ENCODE measurements at regions of chr15 and their contacts with region 1.

Region 1: GRCh38 chr15:75367913-75368688 is at the start of gene MAN2C1:
- DNase-seq: peak; percentile 98
- ATAC-seq: peak; percentile 94
- H3K4me3 ChIP-seq: peak within 1 kb of the TSS; percentile 87
- H3K27ac ChIP-seq: peak within 1 kb of the TSS; percentile 91
- H3K4me1 ChIP-seq: peaks cover 16% of the 10 kb centered on the region
- H3K27me3 ChIP-seq: no peaks in the 10 kb centered on the region
- CTCF ChIP-seq: peak; percentile 79
- total RNA-seq, gene MAN2C1: 120 and 126 TPM in 2 replicates

Region 2: DNA sequence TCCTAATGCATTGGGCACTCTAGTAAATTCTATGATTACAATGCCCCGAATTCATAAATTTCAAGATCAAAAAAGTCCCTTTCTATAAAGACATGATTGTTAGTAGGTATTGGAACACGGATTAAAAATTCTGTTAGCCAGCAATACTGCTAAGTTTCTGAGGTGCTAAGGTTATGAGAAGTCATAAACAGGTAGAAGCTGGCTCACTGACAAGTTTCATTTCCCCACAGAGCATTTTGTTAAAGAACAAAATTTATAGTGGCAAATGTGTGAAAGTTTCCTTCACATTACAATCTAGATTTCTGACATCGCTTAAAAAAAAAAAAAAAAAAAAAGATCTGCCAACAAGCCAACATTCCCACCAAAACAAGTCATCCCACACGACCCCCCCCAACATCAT is 12.7 kb after region 1 on chr15:
- CTCF ChIA-PET with region 1: no interaction called
- POLR2A ChIA-PET with region 1: interaction called, 22 read pairs
- intact Hi-C with region 1: no loop called
- DNase-seq: no peak
- ATAC-seq: no peak
- H3K4me3 ChIP-seq: no peak overlapping the region
- H3K27ac ChIP-seq: no peak overlapping the region
- H3K4me1 ChIP-seq: no peaks in the 10 kb centered on the region
- H3K27me3 ChIP-seq: no peaks in the 10 kb centered on the region
- CTCF ChIP-seq: no peak

Region 3: DNA sequence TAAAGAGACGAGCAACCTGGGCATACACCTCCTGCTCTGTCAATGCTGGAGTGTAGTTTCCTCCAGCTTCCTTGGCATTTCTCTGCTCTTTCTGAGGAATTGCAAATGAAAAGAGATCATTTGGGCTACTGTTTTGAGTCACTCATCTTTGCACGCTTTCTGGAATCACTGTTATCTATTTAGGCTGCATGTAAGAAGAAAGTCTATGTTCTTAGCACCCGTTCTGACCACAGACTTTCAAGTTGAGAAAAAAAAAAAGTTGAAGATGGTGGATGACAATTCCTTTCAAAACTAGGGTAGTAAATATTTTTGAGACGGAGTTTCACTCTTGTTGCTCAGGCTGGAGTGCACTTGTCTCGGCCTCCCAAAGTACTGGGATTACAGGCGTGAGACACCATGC is 42.1 kb after region 1 on chr15:
- CTCF ChIA-PET with region 1: no interaction called
- POLR2A ChIA-PET with region 1: no interaction called
- intact Hi-C with region 1: no loop called
- DNase-seq: no peak
- ATAC-seq: no peak
- H3K4me3 ChIP-seq: no peak overlapping the region
- H3K27ac ChIP-seq: no peak overlapping the region
- H3K4me1 ChIP-seq: no peaks in the 10 kb centered on the region
- H3K27me3 ChIP-seq: no peaks in the 10 kb centered on the region
- CTCF ChIP-seq: no peak

Region 4: GRCh38 chr15:75460646-75461045 is 92.5 kb after region 1 on chr15:
- CTCF ChIA-PET with region 1: interaction called, 14 read pairs
- POLR2A ChIA-PET with region 1: interaction called, 3 read pairs
- intact Hi-C with region 1: no loop called
- DNase-seq: no peak
- ATAC-seq: no peak
- H3K4me3 ChIP-seq: no peak overlapping the region
- H3K27ac ChIP-seq: no peak overlapping the region
- H3K4me1 ChIP-seq: peaks cover 9% of the 10 kb centered on the region; the same call in 1 of the 2 replicates
- H3K27me3 ChIP-seq: no peaks in the 10 kb centered on the region
- CTCF ChIP-seq: no peak

Measured in PC-3 (cell line).